ENCODE measurements at regions of chr3 and their contacts with region 1.

Region 1: GRCh38 chr3:190701096-190701532 is 161.4 kb downstream of the GMNC start:
- DNase-seq: peak; percentile 65 to 81
- H3K4me3 ChIP-seq: no peak overlapping the region
- H3K27ac ChIP-seq: no peak overlapping the region
- H3K4me1 ChIP-seq: peaks cover 21% of the 10 kb centered on the region; the same call in 1 of the 2 replicates
- H3K27me3 ChIP-seq: no peaks in the 10 kb centered on the region
- CTCF ChIP-seq: peak; percentile 87

Region 2: GRCh38 chr3:189602471-189602870 is 1098.6 kb before region 1 on chr3:
- CTCF ChIA-PET with region 1: interaction called, 12 read pairs
- POLR2A ChIA-PET with region 1: no interaction called
- intact Hi-C with region 1: no loop called
- DNase-seq: no peak
- H3K4me3 ChIP-seq: no peak overlapping the region
- H3K27ac ChIP-seq: no peak overlapping the region
- H3K4me1 ChIP-seq: no peaks in the 10 kb centered on the region
- H3K27me3 ChIP-seq: no peaks in the 10 kb centered on the region
- CTCF ChIP-seq: no peak

Region 3: DNA sequence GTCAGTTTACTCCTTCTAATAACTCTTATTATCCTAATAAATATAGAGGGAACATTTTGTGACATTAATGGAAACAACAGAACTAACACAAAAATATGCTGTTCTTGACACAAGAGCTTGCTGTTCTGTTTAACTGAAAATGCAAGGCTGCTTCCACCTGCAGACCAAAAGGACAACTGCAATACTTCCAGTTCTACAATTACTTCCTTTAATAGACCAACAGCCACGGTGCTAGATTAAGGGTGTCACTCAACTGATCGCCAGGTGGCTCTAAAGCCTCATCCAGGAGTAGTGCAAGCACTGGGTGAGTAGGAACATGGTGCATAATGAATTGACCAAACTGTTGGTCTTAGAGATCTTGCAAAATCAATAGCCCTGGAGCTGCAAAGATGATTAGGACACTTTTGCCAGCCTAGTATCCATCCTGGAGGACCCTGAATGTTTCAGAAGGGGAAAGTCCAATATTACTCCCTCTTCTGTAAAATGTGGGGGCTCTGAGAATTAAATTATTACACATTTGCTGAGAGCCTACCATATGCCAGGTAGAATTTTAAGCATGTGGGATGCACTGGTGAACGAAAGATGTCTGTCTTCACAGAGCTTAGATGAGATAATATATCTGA is 316.8 kb before region 1 on chr3:
- CTCF ChIA-PET with region 1: interaction called, 18 read pairs
- POLR2A ChIA-PET with region 1: no interaction called
- intact Hi-C with region 1: loop called (anchors 1 kb)
- DNase-seq: peak; percentile 64 to 67
- H3K4me3 ChIP-seq: no peak overlapping the region
- H3K27ac ChIP-seq: peak overlapping the region; percentile 96
- H3K4me1 ChIP-seq: peaks cover 52% of the 10 kb centered on the region
- H3K27me3 ChIP-seq: no peaks in the 10 kb centered on the region
- CTCF ChIP-seq: peak; percentile 49; the same call in 1 of the 2 replicates

Region 4: GRCh38 chr3:190513409-190514162 is 187.5 kb before region 1 on chr3 and contains the start of gene IL1RAP:
- CTCF ChIA-PET with region 1: interaction called, 5 read pairs
- POLR2A ChIA-PET with region 1: no interaction called
- intact Hi-C with region 1: loop called (anchors 1 kb)
- DNase-seq: peak; percentile 88 to 96
- H3K4me3 ChIP-seq: peak within 1 kb of the TSS; percentile 80
- H3K27ac ChIP-seq: peak within 1 kb of the TSS; percentile 41
- H3K4me1 ChIP-seq: peaks cover 27% of the 10 kb centered on the region
- H3K27me3 ChIP-seq: no peaks in the 10 kb centered on the region
- CTCF ChIP-seq: no peak; the same call in none of the 2 replicates
- total RNA-seq, gene IL1RAP: 8.4 and 13.3 TPM in 2 replicates

Region 5: DNA sequence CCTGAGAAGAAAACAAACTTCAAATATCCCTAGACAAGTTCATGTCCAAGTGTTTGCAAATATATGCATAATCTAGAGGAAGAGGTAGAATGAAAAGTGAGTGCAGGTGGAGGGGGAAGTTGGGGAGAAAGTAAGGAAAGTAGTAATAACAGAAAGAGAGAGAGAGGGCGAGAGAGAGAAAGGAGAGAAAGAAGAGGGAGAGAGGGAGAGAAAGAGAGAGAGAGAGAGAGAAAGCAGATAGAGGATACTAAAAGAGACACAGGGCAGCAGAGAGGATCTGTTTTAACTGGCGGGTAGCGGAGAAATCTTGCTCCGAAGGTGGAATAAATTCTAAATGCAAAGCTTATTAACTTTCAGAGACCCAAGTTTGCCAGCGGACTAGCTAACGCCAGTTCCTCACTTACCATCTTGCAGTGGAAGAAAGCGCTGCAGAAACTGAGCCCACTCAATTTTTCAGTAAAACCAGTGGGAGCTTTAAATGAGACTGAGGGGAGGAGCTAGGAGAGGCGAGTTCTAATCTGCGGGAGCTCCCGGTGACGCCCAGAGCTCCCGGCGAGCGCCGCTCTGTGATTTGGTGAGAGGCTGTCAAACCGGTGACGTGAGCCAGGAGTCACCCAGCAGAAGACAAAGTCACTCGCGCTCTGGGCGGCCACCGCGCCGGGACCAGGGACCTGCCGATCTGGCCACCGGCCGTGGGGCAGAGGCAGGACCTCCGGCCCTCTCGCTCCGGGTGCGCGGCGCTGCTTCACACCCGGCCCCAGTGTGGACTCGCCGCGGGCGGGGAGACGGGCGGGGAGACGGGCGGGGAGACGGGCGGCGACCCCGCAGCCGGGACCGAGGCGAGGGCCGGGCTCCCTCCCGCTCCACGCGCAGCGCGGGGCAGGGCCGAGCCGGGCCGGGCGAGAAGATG is 161.3 kb after region 1 on chr3 and contains the start of gene GMNC:
- CTCF ChIA-PET with region 1: no interaction called
- POLR2A ChIA-PET with region 1: interaction called, 11 read pairs
- intact Hi-C with region 1: loop called (anchors 1 kb)
- DNase-seq: peak; percentile 61 to 85
- H3K4me3 ChIP-seq: peak within 1 kb of the TSS; percentile 59
- H3K27ac ChIP-seq: no peak within 1 kb of the TSS
- H3K4me1 ChIP-seq: peaks cover 4% of the 10 kb centered on the region; the same call in 1 of the 2 replicates
- H3K27me3 ChIP-seq: no peaks in the 10 kb centered on the region
- CTCF ChIP-seq: no peak
- total RNA-seq, gene GMNC: not detected in 2 replicates

Region 6: GRCh38 chr3:191235331-191236314 is 534.5 kb after region 1 on chr3:
- CTCF ChIA-PET with region 1: interaction called, 5 read pairs
- POLR2A ChIA-PET with region 1: no interaction called
- intact Hi-C with region 1: loop called (anchors 1 kb)
- DNase-seq: peak in 1 of 2 experiments; percentile 34
- H3K4me3 ChIP-seq: no peak overlapping the region
- H3K27ac ChIP-seq: peak overlapping the region; percentile 85; the same call in 1 of the 2 replicates
- H3K4me1 ChIP-seq: peaks cover 47% of the 10 kb centered on the region
- H3K27me3 ChIP-seq: no peaks in the 10 kb centered on the region
- CTCF ChIP-seq: no peak

Region 7: DNA sequence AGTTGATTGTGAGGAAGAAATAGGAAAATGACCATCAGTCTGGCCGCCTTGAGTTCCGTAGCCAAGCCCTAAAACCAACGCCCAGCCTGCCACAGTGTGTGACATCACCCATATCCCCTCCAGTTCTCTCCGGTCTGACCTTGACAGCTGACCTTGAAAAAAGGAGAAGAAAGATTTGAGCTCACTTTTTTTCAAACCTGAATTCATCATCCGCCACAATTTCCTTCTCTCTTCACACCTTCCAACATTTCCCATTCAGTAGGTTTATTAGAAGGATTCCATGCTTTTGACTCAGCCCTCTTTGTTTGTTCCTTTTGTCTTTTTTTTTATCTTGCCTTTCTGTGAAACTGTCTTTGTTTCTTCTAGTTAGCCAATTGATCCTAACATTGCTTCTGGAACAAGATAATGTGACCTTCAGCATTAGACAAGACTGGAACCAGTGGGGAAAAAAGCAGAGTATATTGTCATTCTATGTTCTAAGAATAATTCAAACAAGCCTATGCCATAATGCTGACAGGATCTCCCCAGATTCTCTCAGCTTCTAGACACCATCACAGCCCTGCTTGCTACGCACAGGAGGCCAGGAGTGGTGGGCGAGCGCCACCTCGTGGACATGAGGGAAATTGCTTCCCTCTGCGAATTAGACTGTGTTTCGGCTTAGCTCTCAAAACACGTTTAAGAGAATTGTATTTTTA is 1743.1 kb after region 1 on chr3:
- CTCF ChIA-PET with region 1: interaction called, 5 read pairs
- POLR2A ChIA-PET with region 1: no interaction called
- intact Hi-C with region 1: loop called (anchors 1 kb)
- DNase-seq: peak; percentile 58 to 73
- H3K4me3 ChIP-seq: no peak overlapping the region
- H3K27ac ChIP-seq: no peak overlapping the region
- H3K4me1 ChIP-seq: no peaks in the 10 kb centered on the region
- H3K27me3 ChIP-seq: no peaks in the 10 kb centered on the region
- CTCF ChIP-seq: peak; percentile 100